Mammary epithelial cell (primary cell): ENCODE measurements at regions of chr22 and their contacts with region 1.

Region 1: DNA sequence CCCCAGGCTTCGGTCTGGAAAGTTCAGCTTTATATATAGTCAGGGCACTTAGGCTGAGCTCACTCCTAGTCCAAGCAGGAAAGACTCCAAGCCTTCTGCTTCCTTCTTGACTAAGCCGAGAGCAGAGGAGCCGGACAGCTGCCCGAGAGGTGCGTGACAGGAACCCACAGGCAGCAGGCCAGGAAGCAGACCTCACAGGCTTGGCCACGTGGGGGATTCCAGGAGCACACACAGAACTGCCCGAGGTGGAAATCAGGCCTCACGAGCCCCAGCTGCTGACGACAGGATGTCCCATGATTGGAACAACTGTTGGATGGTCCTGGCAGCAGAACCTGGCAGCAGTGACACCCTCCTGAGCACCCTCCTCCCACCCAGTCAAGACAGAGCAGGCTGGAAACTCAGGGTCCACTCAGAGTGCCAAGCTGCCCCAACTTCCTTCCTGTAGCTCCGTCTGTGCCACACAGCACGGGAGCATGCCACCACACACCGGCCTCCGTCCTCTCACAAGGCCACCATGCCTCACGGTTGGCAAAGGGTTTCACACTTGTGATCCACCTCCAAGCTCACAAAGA is 5.4 kb downstream of the PLA2G6 start:
- DNase-seq: peak; percentile 80
- H3K4me3 ChIP-seq: no peak overlapping the region
- H3K27ac ChIP-seq: no peak overlapping the region
- H3K4me1 ChIP-seq: peaks cover 54% of the 10 kb centered on the region
- H3K27me3 ChIP-seq: no peaks in the 10 kb centered on the region
- CTCF ChIP-seq: no peak

Region 2: DNA sequence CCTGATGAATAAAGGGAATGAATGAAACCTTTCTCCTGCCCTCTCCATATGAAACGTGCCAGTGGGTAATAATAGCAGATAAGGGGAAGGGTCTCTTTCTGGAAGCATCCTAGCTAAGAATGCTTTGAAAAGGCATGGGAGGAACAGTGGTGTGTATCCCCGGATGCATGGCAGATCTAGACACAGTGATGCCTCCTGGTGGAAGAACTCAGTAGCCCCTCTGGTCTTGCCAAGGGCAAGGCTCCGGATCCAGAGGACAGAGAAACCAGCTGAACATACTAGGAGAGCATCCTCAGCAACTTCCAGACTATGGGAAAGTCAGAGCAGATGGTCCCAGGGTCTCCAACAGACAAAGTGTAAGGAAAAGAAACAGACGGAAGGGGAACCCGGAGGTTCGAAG is 72.2 kb before region 1 on chr22:
- CTCF ChIA-PET with region 1: no interaction called
- dilution Hi-C with region 1: loop called (anchors 5 kb)
- in situ Hi-C with region 1: no loop called
- intact Hi-C with region 1: no loop called
- DNase-seq: no peak
- H3K4me3 ChIP-seq: no peak overlapping the region
- H3K27ac ChIP-seq: no peak overlapping the region
- H3K4me1 ChIP-seq: no peaks in the 10 kb centered on the region
- H3K27me3 ChIP-seq: no peaks in the 10 kb centered on the region
- CTCF ChIP-seq: peak in 1 of 2 donors; percentile 43

Region 3: GRCh38 chr22:38262051-38262795 is 86.0 kb after region 1 on chr22:
- CTCF ChIA-PET with region 1: no interaction called
- dilution Hi-C with region 1: loop called (anchors 5 kb)
- in situ Hi-C with region 1: no loop called
- intact Hi-C with region 1: no loop called
- DNase-seq: peak; percentile 81
- H3K4me3 ChIP-seq: no peak overlapping the region
- H3K27ac ChIP-seq: no peak overlapping the region
- H3K4me1 ChIP-seq: peaks cover 15% of the 10 kb centered on the region
- H3K27me3 ChIP-seq: no peaks in the 10 kb centered on the region
- CTCF ChIP-seq: peak; percentile 51 to 85

Region 4: GRCh38 chr22:38608992-38609750 is 432.9 kb after region 1 on chr22:
- CTCF ChIA-PET with region 1: no interaction called
- dilution Hi-C with region 1: loop called (anchors 10 kb)
- in situ Hi-C with region 1: no loop called
- intact Hi-C with region 1: no loop called
- DNase-seq: no peak
- H3K4me3 ChIP-seq: no peak overlapping the region
- H3K27ac ChIP-seq: no peak overlapping the region
- H3K4me1 ChIP-seq: peaks cover 7% of the 10 kb centered on the region
- H3K27me3 ChIP-seq: no peaks in the 10 kb centered on the region
- CTCF ChIP-seq: no peak